HCT116 (cell line): ENCODE measurements at regions of chr1 and their contacts with region 1.

Region 1: GRCh38 chr1:56758135-56758534 is 61.1 kb downstream of the FYB2 start:
- DNase-seq: peak; percentile 10
- ATAC-seq: peak; percentile 74
- H3K4me3 ChIP-seq: no peak overlapping the region
- H3K27ac ChIP-seq: no peak overlapping the region
- H3K4me1 ChIP-seq: no peaks in the 10 kb centered on the region
- H3K27me3 ChIP-seq: no peaks in the 10 kb centered on the region; the same call in 1 of the 2 replicates
- CTCF ChIP-seq: peak; percentile 18 to 41 (median 40); a peak in 3 of 6 replicates
- POLR2A ChIP-seq: no peak
- RAD21 ChIP-seq: peak; percentile 55

Region 2: GRCh38 chr1:56788588-56788987 is 30.5 kb after region 1 on chr1:
- CTCF ChIA-PET with region 1: no interaction called
- POLR2A ChIA-PET with region 1: no interaction called
- RAD21 ChIA-PET with region 1: no interaction called
- intact Hi-C with region 1: no loop called
- DNase-seq: no peak
- ATAC-seq: no peak
- H3K4me3 ChIP-seq: no peak overlapping the region
- H3K27ac ChIP-seq: no peak overlapping the region
- H3K4me1 ChIP-seq: no peaks in the 10 kb centered on the region
- H3K27me3 ChIP-seq: peaks cover 18% of the 10 kb centered on the region
- CTCF ChIP-seq: no peak
- POLR2A ChIP-seq: no peak
- RAD21 ChIP-seq: no peak

Region 3: GRCh38 chr1:56803561-56804156 is 45.5 kb after region 1 on chr1:
- CTCF ChIA-PET with region 1: interaction called, 9 read pairs
- POLR2A ChIA-PET with region 1: no interaction called
- RAD21 ChIA-PET with region 1: no interaction called
- intact Hi-C with region 1: loop called (anchors 1 kb)
- DNase-seq: peak; percentile 46
- ATAC-seq: peak; percentile 99
- H3K4me3 ChIP-seq: no peak overlapping the region
- H3K27ac ChIP-seq: no peak overlapping the region
- H3K4me1 ChIP-seq: no peaks in the 10 kb centered on the region
- H3K27me3 ChIP-seq: peaks cover 5% of the 10 kb centered on the region; the same call in 1 of the 2 replicates
- CTCF ChIP-seq: peak; percentile 66 to 76 (median 70)
- POLR2A ChIP-seq: no peak
- RAD21 ChIP-seq: peak; percentile 47

Region 4: DNA sequence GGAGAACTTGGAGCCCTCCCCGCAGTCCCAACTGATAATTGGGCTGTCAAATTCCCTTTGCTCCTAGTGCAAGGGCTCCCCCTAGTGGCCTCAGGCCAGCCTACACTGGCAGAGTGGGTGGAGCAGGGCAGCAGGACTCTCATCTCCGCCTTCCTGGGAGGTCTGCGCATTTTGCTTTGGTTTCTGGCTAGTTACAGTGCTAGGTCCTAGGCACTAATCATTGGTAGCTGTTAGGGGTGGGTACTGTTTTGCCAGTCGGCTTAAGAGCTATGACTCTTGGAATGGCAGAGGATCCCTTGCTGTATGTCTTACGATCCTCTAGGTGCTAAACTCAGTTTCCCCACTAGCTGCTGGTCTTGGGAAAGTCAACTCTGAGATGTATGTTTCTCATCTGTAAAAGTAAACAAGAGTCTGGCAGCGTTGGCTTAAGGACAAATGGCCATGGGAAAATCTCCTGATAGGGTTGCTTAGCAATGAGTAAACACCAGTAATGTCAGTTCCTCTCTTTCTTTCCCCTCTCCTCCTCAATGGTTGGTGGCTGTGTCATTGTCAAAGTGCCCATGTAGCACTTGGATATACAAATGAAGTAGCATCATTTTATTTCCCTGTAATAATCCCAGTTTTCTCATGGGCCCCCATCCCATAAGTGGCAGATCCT is 63.1 kb after region 1 on chr1:
- CTCF ChIA-PET with region 1: interaction called, 12 read pairs
- POLR2A ChIA-PET with region 1: no interaction called
- RAD21 ChIA-PET with region 1: no interaction called
- intact Hi-C with region 1: loop called (anchors 2 kb)
- DNase-seq: peak; percentile 51
- ATAC-seq: peak; percentile 97
- H3K4me3 ChIP-seq: no peak overlapping the region
- H3K27ac ChIP-seq: no peak overlapping the region
- H3K4me1 ChIP-seq: no peaks in the 10 kb centered on the region
- H3K27me3 ChIP-seq: peaks cover 5% of the 10 kb centered on the region
- CTCF ChIP-seq: peak; percentile 68 to 98 (median 97); a peak in 5 of 6 replicates
- POLR2A ChIP-seq: no peak
- RAD21 ChIP-seq: peak; percentile 88